ENCODE measurements at regions of chr17 and their contacts with region 1.

Region 1: GRCh38 chr17:38544839-38545209 is 60.9 kb downstream of the SRCIN1 start:
- DNase-seq: no peak
- H3K4me3 ChIP-seq: no peak overlapping the region
- H3K4me3 Mint-ChIP-seq: no peak overlapping the region
- H3K27ac Mint-ChIP-seq: no peak overlapping the region
- H3K4me1 ChIP-seq: no peaks in the 10 kb centered on the region
- H3K4me1 Mint-ChIP-seq: no peaks in the 10 kb centered on the region
- H3K27me3 ChIP-seq: no peaks in the 10 kb centered on the region
- H3K27me3 Mint-ChIP-seq: no peaks in the 10 kb centered on the region
- CTCF ChIP-seq: no peak

Region 2: GRCh38 chr17:38605888-38606645 is 61.2 kb after region 1 on chr17 and contains the start of gene SRCIN1:
- CTCF ChIA-PET with region 1: no interaction called
- POLR2A ChIA-PET with region 1: no interaction called
- intact Hi-C with region 1: loop called (anchors 1 kb)
- DNase-seq: peak; percentile 81 to 86
- H3K4me3 ChIP-seq: peak within 1 kb of the TSS; percentile 87
- H3K4me3 Mint-ChIP-seq: peak within 1 kb of the TSS; percentile 84
- H3K27ac Mint-ChIP-seq: peak within 1 kb of the TSS; percentile 91
- H3K4me1 ChIP-seq: peaks cover 32% of the 10 kb centered on the region
- H3K4me1 Mint-ChIP-seq: peaks cover 32% of the 10 kb centered on the region
- H3K27me3 ChIP-seq: no peaks in the 10 kb centered on the region
- H3K27me3 Mint-ChIP-seq: no peaks in the 10 kb centered on the region
- CTCF ChIP-seq: peak; percentile 98 to 100
- total RNA-seq, gene SRCIN1: 23.6 and 25.8 TPM in 2 replicates

Region 3: GRCh38 chr17:38824899-38825761 is 280.3 kb after region 1 on chr17 and contains the start of gene CWC25:
- CTCF ChIA-PET with region 1: no interaction called
- POLR2A ChIA-PET with region 1: no interaction called
- intact Hi-C with region 1: no loop called
- DNase-seq: peak; percentile 97 to 98
- H3K4me3 ChIP-seq: peak within 1 kb of the TSS; percentile 86
- H3K4me3 Mint-ChIP-seq: peak within 1 kb of the TSS; percentile 98
- H3K27ac Mint-ChIP-seq: peak within 1 kb of the TSS; percentile 100
- H3K4me1 ChIP-seq: peaks cover 9% of the 10 kb centered on the region
- H3K4me1 Mint-ChIP-seq: no peaks in the 10 kb centered on the region
- H3K27me3 ChIP-seq: no peaks in the 10 kb centered on the region
- H3K27me3 Mint-ChIP-seq: no peaks in the 10 kb centered on the region
- CTCF ChIP-seq: no peak
- total RNA-seq, gene CWC25: 18.2 and 19.1 TPM in 2 replicates

Measured in Caco-2 (cell line).